ENCODE measurements at regions of chr18 and their contacts with region 1.

Region 1: DNA sequence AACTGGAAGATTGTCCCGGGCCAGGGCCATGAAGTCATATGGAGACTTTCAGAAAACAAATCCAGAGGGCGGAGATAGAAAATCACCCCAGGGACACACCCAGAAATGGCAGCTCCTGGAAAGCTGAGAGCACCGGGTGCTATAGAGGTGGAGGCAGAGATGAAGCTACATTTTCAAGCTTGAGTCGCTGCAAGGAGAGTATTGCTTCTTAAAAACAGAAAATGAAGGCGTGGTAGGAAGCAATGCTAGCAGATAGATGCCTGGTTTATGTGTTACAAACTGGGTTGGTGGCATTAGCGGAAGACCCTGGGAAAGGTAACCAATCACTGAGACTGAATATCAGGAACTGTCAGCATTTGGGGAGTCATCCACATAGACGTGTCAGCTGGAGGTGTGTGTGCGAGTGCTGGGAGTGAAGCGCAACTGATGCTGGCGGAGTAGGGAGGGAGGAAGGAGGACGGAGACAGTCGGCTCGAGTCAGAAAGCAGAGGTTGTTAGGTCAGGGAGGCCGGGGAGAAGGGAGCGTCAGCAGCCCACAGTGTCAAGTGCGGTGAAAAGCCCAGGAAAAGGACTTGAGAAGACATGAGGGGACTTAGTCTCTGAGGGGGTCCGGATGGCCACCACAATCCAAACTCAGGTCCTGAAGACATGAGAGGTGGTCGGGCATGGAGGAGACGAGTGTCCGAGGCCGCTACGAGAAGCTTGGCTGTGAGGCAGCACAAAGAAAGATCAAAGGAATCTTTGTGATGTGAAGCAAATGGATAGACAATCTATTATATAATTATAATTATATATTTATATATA is 45.4 kb downstream of the C18orf63 start:
- DNase-seq: no peak
- ATAC-seq: no peak
- H3K4me3 ChIP-seq: no peak overlapping the region
- H3K27ac ChIP-seq: no peak overlapping the region
- H3K4me1 ChIP-seq: no peaks in the 10 kb centered on the region
- H3K27me3 ChIP-seq: no peaks in the 10 kb centered on the region
- CTCF ChIP-seq: no peak
- POLR2A ChIP-seq: no peak

Region 2: DNA sequence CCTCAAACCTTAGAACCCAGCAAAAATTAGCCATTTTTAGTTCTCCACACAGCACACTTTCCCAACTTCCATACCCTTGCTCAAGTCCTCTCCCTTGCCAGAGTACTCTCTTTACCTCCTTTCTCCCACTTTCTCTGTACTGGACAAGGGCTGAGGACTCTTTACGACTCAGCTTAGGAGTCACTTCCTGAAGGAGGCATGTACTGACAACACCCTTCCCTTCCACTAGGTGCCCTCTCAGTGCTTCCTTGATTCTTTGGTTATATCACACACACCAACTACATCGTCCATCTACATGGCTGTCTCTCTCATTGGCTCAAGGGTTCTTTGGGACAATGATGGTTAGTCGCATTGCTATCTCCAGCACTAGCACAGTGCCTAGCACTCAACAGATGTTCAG is 50.6 kb before region 1 on chr18:
- intact Hi-C with region 1: no loop called
- DNase-seq: peak in 2 of 4 donors; percentile 26 to 46
- ATAC-seq: peak; percentile 93
- H3K4me3 ChIP-seq: no peak overlapping the region
- H3K27ac ChIP-seq: no peak overlapping the region
- H3K4me1 ChIP-seq: no peaks in the 10 kb centered on the region
- H3K27me3 ChIP-seq: no peaks in the 10 kb centered on the region
- CTCF ChIP-seq: peak in 4 of 7 experiments; percentile 38 to 62 (median 56)
- POLR2A ChIP-seq: no peak

Region 3: GRCh38 chr18:74479486-74480148 is 118.6 kb after region 1 on chr18:
- intact Hi-C with region 1: loop called (anchors 5 kb)
- DNase-seq: no peak
- ATAC-seq: no peak
- H3K4me3 ChIP-seq: no peak overlapping the region
- H3K27ac ChIP-seq: peak overlapping the region in 1 of 4 donors; percentile 67
- H3K4me1 ChIP-seq: peaks cover 14% of the 10 kb centered on the region
- H3K27me3 ChIP-seq: no peaks in the 10 kb centered on the region
- CTCF ChIP-seq: no peak
- POLR2A ChIP-seq: no peak

Measured in body of pancreas (tissue), 4 donors.